A673 (cell line): ENCODE measurements at regions of chr10 and their contacts with region 1.

Region 1: GRCh38 chr10:67764012-67764822 is 68.2 kb upstream of the CTNNA3 start:
- DNase-seq: peak; percentile 98
- H3K4me3 ChIP-seq: peak overlapping the region; percentile 69
- H3K27ac ChIP-seq: peak overlapping the region; percentile 97
- H3K4me1 ChIP-seq: no peaks in the 10 kb centered on the region
- H3K27me3 ChIP-seq: no peaks in the 10 kb centered on the region
- CTCF ChIP-seq: no peak

Region 2: GRCh38 chr10:67884313-67884841 is 120.2 kb after region 1 on chr10 and contains the start of gene SIRT1:
- CTCF ChIA-PET with region 1: no interaction called
- POLR2A ChIA-PET with region 1: interaction called, 12 read pairs
- intact Hi-C with region 1: no loop called
- DNase-seq: peak; percentile 98
- H3K4me3 ChIP-seq: peak within 1 kb of the TSS; percentile 92
- H3K27ac ChIP-seq: peak within 1 kb of the TSS; percentile 87
- H3K4me1 ChIP-seq: peaks cover 16% of the 10 kb centered on the region
- H3K27me3 ChIP-seq: no peaks in the 10 kb centered on the region
- CTCF ChIP-seq: 0 out of 2 replicates have a peak, but pooled peaks have one; percentile 7
- total RNA-seq, gene SIRT1: 41.0 and 42.6 TPM in 2 replicates

Region 3: DNA sequence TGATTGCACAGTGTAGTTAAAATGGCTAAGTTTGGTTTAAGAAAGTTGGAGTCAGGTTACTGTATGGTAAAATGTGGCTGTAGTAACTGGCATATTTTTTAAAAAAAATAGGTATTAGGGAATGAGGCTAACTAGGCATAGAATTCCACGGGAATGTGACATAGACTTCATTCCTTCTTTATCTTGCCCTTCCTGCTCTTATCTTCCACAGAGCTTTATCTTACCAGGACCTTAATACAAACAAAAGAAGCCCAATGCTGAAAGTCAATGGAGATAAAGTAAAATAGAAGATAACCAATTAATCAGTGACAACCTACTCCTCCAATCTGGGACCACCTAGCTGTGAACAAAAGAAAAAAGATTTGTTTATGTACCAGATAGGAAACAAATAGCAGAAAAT is 854.0 kb after region 1 on chr10:
- CTCF ChIA-PET with region 1: no interaction called
- POLR2A ChIA-PET with region 1: no interaction called
- intact Hi-C with region 1: no loop called
- DNase-seq: no peak
- H3K4me3 ChIP-seq: no peak overlapping the region
- H3K27ac ChIP-seq: no peak overlapping the region
- H3K4me1 ChIP-seq: peaks cover 35% of the 10 kb centered on the region
- H3K27me3 ChIP-seq: no peaks in the 10 kb centered on the region
- CTCF ChIP-seq: no peak